ENCODE measurements at regions of chr13 and their contacts with region 1.

Region 1: GRCh38 chr13:110412132-110412914 is 105.2 kb downstream of the COL4A2 start:
- DNase-seq: peak; percentile 72 to 79 (median 75)
- ATAC-seq: peak; percentile 86 to 92 (median 88)
- H3K4me3 ChIP-seq: no peak overlapping the region
- H3K27ac ChIP-seq: peak overlapping the region; percentile 38 to 65 (median 52)
- H3K4me1 ChIP-seq: peaks cover 0 to 6% (median 0%) of the 10 kb centered on the region in 4 donors
- H3K27me3 ChIP-seq: no peaks in the 10 kb centered on the region
- CTCF ChIP-seq: peak; percentile 85 to 94 (median 88)
- POLR2A ChIP-seq: no peak

Region 2: GRCh38 chr13:110138010-110138699 is 274.2 kb before region 1 on chr13:
- intact Hi-C with region 1: no loop called
- DNase-seq: peak; percentile 64 to 79 (median 69)
- ATAC-seq: peak; percentile 80 to 81 (median 80)
- H3K4me3 ChIP-seq: peak overlapping the region; percentile 41 to 65 (median 61)
- H3K27ac ChIP-seq: peak overlapping the region in 2 of 3 donors; percentile 45 to 52
- H3K4me1 ChIP-seq: peaks cover 0 to 7% (median 3%) of the 10 kb centered on the region in 4 donors
- H3K27me3 ChIP-seq: no peaks in the 10 kb centered on the region
- CTCF ChIP-seq: peak in 2 of 4 donors; percentile 3 to 16
- POLR2A ChIP-seq: peak; percentile 61

Region 3: GRCh38 chr13:110225609-110226562 is 186.4 kb before region 1 on chr13:
- intact Hi-C with region 1: loop called in 1 of 2 experiments (anchors 10 kb)
- DNase-seq: no peak
- ATAC-seq: peak in 3 of 4 donors; percentile 18 to 44 (median 19)
- H3K4me3 ChIP-seq: no peak overlapping the region
- H3K27ac ChIP-seq: peak overlapping the region in 2 of 3 donors; percentile 0 to 44
- H3K4me1 ChIP-seq: no peaks in the 10 kb centered on the region
- H3K27me3 ChIP-seq: no peaks in the 10 kb centered on the region
- CTCF ChIP-seq: no peak
- POLR2A ChIP-seq: no peak

Region 4: GRCh38 chr13:110244071-110244830 is 168.1 kb before region 1 on chr13:
- intact Hi-C with region 1: no loop called
- DNase-seq: no peak
- ATAC-seq: no peak
- H3K4me3 ChIP-seq: no peak overlapping the region
- H3K27ac ChIP-seq: peak overlapping the region in 1 of 3 donors; percentile 28
- H3K4me1 ChIP-seq: no peaks in the 10 kb centered on the region
- H3K27me3 ChIP-seq: no peaks in the 10 kb centered on the region
- CTCF ChIP-seq: no peak
- POLR2A ChIP-seq: no peak